ENCODE measurements at regions of chr22 and their contacts with region 1.

Region 1: DNA sequence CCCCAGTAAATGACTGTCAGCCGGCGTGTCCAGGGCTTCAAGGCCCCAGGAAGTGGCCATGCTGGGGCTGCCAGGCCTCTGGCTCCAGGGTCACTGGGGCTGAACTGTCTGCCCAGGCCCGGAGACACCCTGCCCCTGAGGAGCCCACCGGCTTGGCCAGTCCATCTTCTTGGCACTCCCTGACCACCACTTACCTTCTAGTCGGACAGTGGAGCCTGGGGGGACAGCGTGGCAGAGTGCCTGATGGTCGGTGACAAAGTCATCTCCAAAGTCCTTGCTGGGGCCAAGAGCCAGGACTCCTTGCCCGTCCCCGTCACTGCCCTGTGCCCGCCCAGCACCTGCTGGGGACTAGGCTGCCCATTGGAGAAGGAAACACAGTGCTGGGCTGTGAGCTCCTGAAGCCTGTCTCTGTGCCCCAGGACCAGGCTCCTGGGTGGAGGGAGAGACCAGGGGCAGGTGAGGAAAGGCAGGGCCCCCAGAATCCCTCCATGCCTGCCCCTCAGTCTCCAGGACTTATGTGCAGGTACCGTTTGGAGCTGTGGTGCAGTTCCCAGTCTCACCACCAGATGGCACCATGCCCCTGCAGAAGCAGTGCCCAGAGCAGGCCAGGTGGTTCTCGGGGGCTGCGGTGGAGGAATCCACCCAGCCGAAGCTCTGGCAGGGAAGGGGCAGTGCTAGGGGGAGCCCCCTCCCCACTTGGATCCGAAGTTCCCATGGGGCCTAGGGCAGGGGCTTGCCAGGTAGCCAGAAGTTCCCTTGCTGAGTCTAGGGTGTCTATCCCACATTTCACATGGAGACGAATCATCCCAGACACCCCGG is 6.0 kb upstream of the CCDC188 start:
- DNase-seq: peak; percentile 90
- H3K4me3 ChIP-seq: peak overlapping the region; percentile 49 to 61; a peak in 2 of 4 replicates
- H3K27ac ChIP-seq: peak overlapping the region in 1 of 2 experiments; percentile 74; a peak in 1 of 4 replicates
- H3K4me1 ChIP-seq: peaks cover 0 to 35% of the 10 kb centered on the region in 2 experiments; a peak in 1 of 4 replicates
- H3K27me3 ChIP-seq: no peaks in the 10 kb centered on the region
- CTCF ChIP-seq: peak; percentile 95
- EP300 ChIP-seq: no peak
- RAD21 ChIP-seq: peak; percentile 98

Region 2: DNA sequence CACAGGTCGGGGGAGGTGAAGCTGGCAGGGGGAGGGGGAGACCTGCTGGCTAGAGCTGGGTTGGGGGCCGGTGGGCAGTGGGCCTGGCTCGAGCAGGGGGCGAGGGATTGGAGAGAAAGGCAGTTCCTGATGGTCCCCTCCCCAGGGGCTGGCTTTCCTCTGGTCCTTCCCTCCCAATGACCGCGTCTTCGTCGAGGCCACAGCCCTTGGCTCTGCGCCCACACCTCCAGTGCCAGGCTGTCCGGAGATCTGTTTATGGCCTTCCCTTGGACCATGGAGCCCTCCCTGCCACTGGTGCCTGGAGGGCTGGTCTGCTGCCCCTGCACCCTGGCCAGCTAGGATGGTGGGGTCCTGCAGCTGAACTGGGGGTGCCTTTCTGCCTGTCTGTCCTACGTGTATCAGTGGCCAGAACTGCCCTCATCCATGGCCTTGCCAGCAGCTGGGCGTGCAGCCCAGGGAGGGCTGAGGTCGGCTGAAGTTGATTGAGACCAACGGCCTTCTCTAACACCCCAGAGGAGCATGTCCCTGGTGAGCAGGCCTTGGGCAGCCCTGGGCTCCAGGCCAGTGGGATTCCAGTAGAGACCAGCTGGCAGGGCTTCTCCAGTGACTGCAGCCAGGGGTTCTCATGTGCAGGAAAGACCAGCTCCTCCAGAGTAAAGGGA is 123.6 kb before region 1 on chr22:
- CTCF ChIA-PET with region 1: no interaction called
- POLR2A ChIA-PET with region 1: no interaction called
- DNase-seq: peak; percentile 70
- H3K4me3 ChIP-seq: no peak overlapping the region
- H3K27ac ChIP-seq: peak overlapping the region in 1 of 2 experiments; percentile 47; a peak in 1 of 4 replicates
- H3K4me1 ChIP-seq: peaks cover 0 to 35% of the 10 kb centered on the region in 2 experiments; a peak in 1 of 4 replicates
- H3K27me3 ChIP-seq: no peaks in the 10 kb centered on the region
- CTCF ChIP-seq: no peak
- EP300 ChIP-seq: no peak
- RAD21 ChIP-seq: no peak

Region 3: DNA sequence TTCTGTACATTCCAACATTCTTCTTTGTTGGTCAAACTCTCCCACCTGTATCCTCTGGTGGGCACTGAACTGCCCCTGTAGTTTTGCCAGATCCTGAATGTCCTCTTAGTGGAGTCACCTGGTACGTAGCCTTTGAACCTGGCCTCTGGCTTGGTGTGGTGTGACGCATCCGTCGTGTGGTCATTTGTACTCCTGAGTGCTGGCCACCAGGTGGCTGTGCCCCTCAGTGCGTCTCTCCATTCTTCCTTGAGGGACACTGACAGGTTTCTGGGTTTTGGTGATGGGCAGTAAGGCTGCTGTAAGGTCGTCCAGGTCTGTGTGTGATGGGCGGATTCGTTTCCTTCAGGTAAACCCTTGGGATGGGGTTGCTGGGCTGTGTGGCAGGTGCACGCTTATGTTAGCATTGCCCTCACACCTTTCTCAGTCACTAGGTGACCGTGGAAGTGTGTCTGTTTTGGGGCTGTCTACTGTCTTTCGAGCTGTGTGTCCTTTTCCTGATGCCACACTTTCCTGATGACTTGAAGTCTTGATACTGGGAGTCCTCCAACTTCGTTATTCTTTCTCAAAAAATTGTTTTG is 54.5 kb before region 1 on chr22:
- CTCF ChIA-PET with region 1: no interaction called
- POLR2A ChIA-PET with region 1: no interaction called
- DNase-seq: no peak
- H3K4me3 ChIP-seq: no peak overlapping the region
- H3K27ac ChIP-seq: no peak overlapping the region
- H3K4me1 ChIP-seq: no peaks in the 10 kb centered on the region; a peak in 1 of 4 replicates
- H3K27me3 ChIP-seq: no peaks in the 10 kb centered on the region
- CTCF ChIP-seq: no peak
- EP300 ChIP-seq: no peak
- RAD21 ChIP-seq: no peak

Region 4: DNA sequence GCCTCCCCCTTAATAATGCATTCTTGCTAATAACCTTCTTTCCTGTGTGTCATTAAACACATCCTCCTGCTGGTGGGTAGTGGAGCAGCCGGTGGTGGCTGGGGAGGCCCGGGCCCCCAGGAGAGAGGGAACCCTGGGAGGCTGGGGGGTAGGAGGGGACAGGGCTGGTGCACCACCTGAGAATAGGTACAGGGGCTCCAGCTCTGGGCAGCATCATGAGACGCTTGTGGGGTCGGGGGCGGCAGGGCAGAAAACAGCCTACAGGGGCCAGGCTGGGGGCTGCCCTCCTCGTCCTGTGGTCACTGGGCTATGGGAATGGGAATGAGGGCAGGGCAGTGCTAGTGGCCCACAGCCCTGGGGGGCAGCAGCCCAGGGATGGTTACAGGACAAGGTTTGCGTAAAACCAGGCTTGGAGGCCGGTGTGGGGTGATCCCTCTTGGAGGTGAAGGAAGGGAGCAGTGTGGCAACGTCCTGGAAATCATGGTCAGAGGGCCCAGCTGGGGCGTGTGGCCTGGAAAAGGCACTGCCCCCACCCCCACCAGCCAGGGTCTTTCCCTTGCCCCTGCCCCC is 12.5 kb after region 1 on chr22:
- CTCF ChIA-PET with region 1: interaction called, 13 read pairs
- POLR2A ChIA-PET with region 1: no interaction called
- DNase-seq: no peak
- H3K4me3 ChIP-seq: no peak overlapping the region
- H3K27ac ChIP-seq: no peak overlapping the region
- H3K4me1 ChIP-seq: peaks cover 0 to 2% of the 10 kb centered on the region in 2 experiments; a peak in 1 of 4 replicates
- H3K27me3 ChIP-seq: no peaks in the 10 kb centered on the region; the same call in 1 of the 2 replicates
- CTCF ChIP-seq: no peak
- EP300 ChIP-seq: no peak
- RAD21 ChIP-seq: no peak

Region 5: DNA sequence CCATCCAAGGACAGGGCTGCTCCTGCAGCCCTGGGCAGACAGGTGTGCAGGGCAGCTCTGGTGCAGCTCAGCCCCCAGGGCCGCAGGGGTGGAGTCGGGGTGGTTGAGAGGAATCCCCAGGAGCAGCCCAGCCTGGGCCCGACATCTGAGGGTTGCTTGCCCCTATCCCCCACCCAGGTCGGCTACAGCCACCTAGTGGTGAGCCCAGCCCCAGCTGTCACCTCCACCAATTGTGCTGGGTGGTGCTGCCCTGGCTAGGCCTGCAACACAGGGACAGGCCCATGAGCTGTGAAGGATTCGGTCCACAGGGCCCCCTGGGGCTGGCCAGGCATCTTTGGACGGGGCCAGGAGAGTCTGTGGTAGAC is 81.7 kb after region 1 on chr22:
- CTCF ChIA-PET with region 1: interaction called, 38 read pairs
- POLR2A ChIA-PET with region 1: interaction called, 3 read pairs
- DNase-seq: peak; percentile 89
- H3K4me3 ChIP-seq: no peak overlapping the region
- H3K27ac ChIP-seq: no peak overlapping the region
- H3K4me1 ChIP-seq: peaks cover 0 to 30% of the 10 kb centered on the region in 2 experiments; a peak in 1 of 4 replicates
- H3K27me3 ChIP-seq: no peaks in the 10 kb centered on the region
- CTCF ChIP-seq: peak; percentile 43
- EP300 ChIP-seq: no peak
- RAD21 ChIP-seq: peak; percentile 67

Region 6: DNA sequence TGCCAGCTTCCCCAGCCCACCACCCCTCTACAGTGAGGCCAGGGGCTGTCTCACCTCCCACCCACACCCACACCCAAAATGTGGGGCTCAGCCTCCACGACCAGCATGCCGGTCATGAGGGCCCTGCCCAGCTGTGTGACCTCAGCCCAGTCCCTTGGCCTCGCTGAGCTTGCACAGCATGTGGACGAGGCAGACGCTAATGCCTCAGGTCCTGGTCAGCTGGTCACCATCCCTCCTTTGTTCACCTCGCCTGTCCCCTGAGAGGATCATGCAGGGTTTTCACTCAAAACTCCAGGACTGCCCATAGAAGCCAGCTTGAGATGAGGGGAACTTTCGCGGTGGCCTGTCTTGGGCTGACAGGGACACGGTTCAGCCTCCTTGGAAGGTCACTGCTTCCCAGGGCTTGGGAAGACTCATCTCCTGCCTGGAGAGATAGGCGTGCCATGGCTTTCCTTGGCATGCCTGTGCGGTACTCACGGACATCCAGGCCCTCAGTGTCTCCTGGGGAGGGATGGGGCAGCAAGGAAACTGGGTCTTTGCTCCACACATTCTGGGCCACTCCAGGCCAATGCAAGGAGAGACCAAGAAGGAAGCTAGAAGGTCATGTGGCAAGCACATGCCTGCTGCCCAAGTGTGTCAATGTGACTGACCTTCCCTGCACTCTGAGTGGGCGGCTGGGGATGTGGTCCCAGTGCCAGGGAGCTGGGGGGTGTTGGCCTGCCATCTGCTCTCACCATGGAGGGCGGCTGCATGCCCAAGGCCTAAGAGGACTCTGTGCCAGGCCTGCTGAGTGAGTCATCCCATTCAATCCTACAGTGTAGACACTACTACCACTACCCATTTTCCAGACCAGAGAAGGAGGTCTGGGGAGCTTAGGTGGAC is 114.5 kb after region 1 on chr22:
- CTCF ChIA-PET with region 1: interaction called, 14 read pairs
- POLR2A ChIA-PET with region 1: no interaction called
- DNase-seq: no peak
- H3K4me3 ChIP-seq: no peak overlapping the region
- H3K27ac ChIP-seq: peak overlapping the region in 1 of 2 experiments; percentile 28; a peak in 1 of 4 replicates
- H3K4me1 ChIP-seq: peaks cover 0 to 26% of the 10 kb centered on the region in 2 experiments; a peak in 1 of 4 replicates
- H3K27me3 ChIP-seq: no peaks in the 10 kb centered on the region
- CTCF ChIP-seq: no peak
- EP300 ChIP-seq: no peak
- RAD21 ChIP-seq: no peak

Region 7: GRCh38 chr22:20295262-20296064 is 138.6 kb after region 1 on chr22:
- CTCF ChIA-PET with region 1: interaction called, 42 read pairs
- POLR2A ChIA-PET with region 1: no interaction called
- DNase-seq: no peak
- H3K4me3 ChIP-seq: no peak overlapping the region
- H3K27ac ChIP-seq: no peak overlapping the region
- H3K4me1 ChIP-seq: peaks cover 0 to 12% of the 10 kb centered on the region in 2 experiments; a peak in 1 of 4 replicates
- H3K27me3 ChIP-seq: peaks cover 4% of the 10 kb centered on the region; the same call in 1 of the 2 replicates
- CTCF ChIP-seq: no peak
- EP300 ChIP-seq: no peak
- RAD21 ChIP-seq: no peak

Region 8: GRCh38 chr22:20555276-20555675 is 398.5 kb after region 1 on chr22:
- CTCF ChIA-PET with region 1: no interaction called
- POLR2A ChIA-PET with region 1: no interaction called
- DNase-seq: peak; percentile 1
- H3K4me3 ChIP-seq: no peak overlapping the region
- H3K27ac ChIP-seq: 0 out of 4 replicates have a peak overlapping the region, but pooled peaks of 1 of the 2 experiments have one; percentile 9
- H3K4me1 ChIP-seq: peaks cover 12 to 25% of the 10 kb centered on the region in 2 experiments; a peak in 3 of 4 replicates
- H3K27me3 ChIP-seq: no peaks in the 10 kb centered on the region
- CTCF ChIP-seq: no peak
- EP300 ChIP-seq: no peak
- RAD21 ChIP-seq: no peak